GM10248 (cell line): ENCODE measurements at regions of chr7 and their contacts with region 1.

Region 1: DNA sequence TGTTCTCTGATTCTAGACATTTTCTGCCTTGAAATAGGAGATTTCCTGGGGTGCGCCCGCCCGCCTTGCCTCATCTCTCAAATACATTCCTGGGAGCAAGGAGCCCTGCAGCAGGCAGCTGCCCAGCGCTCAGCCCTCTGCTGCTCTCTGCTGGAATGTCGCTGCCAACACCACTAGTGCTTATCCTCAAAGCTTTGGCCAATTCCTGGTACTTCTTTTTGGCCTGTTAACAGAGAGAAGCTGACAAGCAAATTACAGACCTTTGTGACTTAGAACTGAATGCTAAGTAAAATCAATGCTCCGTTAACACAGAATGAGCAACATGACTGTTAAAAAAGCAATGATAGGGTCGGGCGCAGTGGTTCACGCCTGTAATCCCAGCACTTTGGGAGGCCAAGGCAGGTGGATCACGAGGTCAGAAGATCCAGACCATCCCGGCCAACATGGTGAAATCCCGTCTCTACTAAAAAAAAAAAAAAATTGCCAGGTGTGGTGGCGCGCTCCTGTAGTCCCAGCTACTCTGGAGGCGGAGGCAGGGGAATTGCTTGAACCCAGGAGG is 41.9 kb upstream of the SYPL1 start:
- DNase-seq: peak; percentile 81
- CTCF ChIP-seq: peak; percentile 94

Region 2: GRCh38 chr7:106050011-106050745 is 103.8 kb before region 1 on chr7:
- CTCF ChIA-PET with region 1: interaction called, 163 read pairs
- POLR2A ChIA-PET with region 1: no interaction called
- DNase-seq: no peak
- CTCF ChIP-seq: no peak

Region 3: GRCh38 chr7:106071356-106071998 is 82.5 kb before region 1 on chr7:
- CTCF ChIA-PET with region 1: interaction called, 22 read pairs
- POLR2A ChIA-PET with region 1: no interaction called
- DNase-seq: peak; percentile 81
- CTCF ChIP-seq: no peak

Region 4: GRCh38 chr7:106126170-106126938 is 27.6 kb before region 1 on chr7:
- CTCF ChIA-PET with region 1: interaction called, 13 read pairs
- POLR2A ChIA-PET with region 1: no interaction called
- DNase-seq: no peak
- CTCF ChIP-seq: no peak

Region 5: DNA sequence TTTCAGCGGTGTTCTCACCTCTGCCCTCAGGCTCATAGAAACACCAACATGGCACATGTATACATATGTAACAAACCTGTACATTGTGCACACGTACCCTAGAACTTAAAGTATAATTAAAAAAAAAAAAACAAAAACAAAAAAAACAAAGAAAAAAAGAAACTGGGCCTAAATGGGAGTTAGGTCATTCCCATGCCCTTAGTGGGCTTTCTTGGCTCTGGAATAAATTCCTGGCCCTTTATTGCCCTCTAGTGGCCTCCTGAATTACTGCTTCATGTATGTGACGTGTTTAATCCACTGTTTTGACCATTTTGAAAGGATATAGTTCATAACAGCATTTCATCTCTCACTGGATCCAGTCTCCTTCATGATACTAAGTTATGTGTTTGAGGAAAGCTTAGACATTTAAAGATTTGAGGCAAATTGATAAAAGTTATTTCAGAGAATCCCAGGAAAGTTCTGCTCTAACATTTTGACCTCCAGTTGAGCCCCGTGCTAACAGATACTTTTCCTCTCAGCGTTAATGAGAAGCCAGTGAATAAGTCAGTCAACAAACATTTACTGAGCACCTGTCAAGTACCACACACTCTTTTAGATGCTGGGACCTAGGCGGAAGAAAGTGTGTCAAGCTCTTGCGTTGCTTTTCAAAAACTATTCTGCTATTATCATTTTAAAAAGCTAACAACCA is 12.8 kb after region 1 on chr7:
- CTCF ChIA-PET with region 1: interaction called, 113 read pairs
- POLR2A ChIA-PET with region 1: no interaction called
- DNase-seq: no peak
- CTCF ChIP-seq: peak; percentile 79